ENCODE measurements at regions of chr9 and their contacts with region 1.

Region 1: DNA sequence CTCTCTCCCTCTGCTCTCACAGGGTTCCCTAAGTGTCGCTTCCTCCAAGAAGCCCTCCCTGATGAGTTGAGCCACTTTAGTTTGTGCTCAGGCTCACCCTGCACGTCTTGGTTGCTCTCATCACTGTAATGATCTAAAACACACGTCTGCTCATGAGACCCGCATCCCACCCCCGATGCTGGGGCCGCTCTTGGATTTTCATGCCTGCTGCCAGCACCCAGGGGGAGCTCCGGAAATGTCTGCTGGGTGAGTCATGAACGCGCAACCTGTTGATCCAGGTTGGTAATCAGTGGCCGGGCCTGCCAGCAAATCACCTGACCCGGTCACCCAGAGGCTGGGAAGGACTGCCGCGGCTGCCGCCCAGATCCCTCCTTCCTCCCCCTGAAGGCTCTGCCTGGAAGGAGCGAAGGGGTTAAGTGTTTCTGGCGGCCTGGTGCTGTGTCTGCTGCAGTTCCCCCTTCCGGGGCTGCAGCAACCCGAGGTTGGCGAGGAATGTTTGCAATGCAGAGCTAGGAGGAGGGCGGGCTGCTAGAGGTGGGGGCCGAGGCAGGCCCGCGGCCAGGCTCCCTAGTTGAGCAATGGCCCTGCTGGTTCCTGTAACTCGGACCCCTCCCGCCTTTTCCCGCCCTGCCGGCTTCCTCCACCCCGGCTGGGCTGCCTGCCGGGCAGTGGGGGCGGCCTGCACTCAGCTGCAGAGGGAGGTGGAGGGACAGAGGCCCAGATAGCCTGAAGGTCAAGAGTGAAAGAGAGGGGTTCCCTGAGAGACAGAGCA is 156.1 kb upstream of the IER5L start:
- ATAC-seq: peak; percentile 72 to 88 (median 84)
- H3K4me3 ChIP-seq: no peak overlapping the region
- H3K27ac ChIP-seq: peak overlapping the region; percentile 22 to 47
- H3K4me1 ChIP-seq: peaks cover 32 to 45% of the 10 kb centered on the region in 2 donors

Region 2: GRCh38 chr9:128528445-128529160 is 805.5 kb before region 1 on chr9:
- in situ Hi-C with region 1: no loop called
- ATAC-seq: no peak
- H3K4me3 ChIP-seq: no peak overlapping the region
- H3K27ac ChIP-seq: no peak overlapping the region
- H3K4me1 ChIP-seq: no peaks in the 10 kb centered on the region

Region 3: DNA sequence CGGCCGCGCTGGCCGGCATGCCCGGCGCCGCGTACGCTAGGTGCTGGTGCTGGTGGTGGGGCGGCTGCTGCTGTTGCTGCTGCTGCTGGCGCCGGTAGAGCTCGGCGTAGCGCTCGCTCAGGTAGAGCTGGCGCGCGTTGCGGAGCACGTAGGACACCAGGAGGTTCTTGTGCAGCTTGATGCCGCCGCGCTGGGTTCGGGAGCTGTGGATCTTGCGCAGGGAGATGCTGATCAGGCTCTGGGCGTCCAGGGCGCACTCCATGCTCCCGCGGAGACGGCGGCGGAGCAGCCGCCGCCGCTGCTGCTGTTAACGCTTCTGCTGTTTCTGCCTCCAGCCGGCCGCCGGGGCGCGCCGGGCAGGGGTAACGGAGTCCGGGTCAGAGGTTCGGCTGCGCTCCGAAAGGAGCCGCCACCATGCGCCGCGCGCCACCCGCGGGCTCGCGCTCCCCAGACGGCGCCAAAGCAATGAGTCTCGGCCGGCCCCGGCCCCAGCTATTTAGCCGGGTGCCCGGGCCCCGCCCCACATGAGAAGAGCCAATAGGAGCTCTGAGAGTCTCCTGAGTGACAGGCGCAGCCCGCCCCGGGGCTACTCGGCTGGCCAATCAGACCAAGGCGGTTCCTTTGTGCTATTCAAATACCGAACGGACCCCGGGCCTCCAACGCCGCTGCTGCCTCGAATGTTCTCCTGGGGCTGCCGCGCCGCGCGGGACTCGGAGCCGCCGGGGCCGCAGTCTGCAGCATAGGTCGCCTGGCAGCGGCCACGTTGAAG is 156.2 kb before region 1 on chr9 and contains the start of gene IER5L:
- in situ Hi-C with region 1: loop called in 1 of 9 experiments (anchors 25 kb)
- ATAC-seq: peak; percentile 65 to 86 (median 77)
- H3K4me3 ChIP-seq: peak within 1 kb of the TSS; percentile 68 to 78 (median 73)
- H3K27ac ChIP-seq: peak within 1 kb of the TSS; percentile 81
- H3K4me1 ChIP-seq: peaks cover 13 to 20% of the 10 kb centered on the region in 2 donors
- total RNA-seq, gene IER5L: 2.1 to 24.8 (median 13.9) TPM

Measured in motor neuron (in vitro differentiated cells).